GM18951 (cell line): ENCODE measurements at regions of chr3 and their contacts with region 1.

Region 1: GRCh38 chr3:129650256-129650872 is 43.9 kb upstream of the PLXND1 start:
- POLR2A ChIP-seq: no peak

Region 2: DNA sequence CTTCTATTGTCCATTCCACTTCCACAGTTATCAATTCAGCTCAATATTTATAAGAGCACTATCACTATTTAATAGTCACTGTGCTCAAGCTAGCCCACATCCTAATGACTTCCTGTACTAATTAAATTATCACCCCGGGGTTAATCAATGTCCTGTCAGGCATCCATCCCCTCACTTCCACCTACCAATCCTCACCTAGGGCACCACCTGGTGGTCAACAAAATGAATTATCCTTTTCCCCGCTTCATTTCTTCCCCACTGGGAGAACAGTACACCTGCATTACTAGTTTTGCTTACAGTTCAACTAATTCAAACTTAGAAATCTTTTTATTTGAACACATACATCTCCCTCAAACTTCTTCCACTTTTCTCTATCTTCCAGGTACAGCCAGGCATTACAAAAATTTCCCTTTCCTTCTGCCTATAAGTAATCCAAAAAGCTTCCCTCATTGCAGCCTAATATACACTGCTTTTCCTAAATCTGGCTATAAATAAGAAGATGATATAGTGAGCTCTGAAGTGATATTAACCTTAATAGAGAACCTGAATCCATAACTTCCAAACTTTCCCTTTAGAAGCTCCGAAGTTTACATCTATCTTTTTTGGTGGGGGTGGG is 174.7 kb after region 1 on chr3:
- in situ Hi-C with region 1: loop called (anchors 5 kb)
- POLR2A ChIP-seq: no peak